H1 (cell line): ENCODE measurements at regions of chr4 and their contacts with region 1.

Region 1: DNA sequence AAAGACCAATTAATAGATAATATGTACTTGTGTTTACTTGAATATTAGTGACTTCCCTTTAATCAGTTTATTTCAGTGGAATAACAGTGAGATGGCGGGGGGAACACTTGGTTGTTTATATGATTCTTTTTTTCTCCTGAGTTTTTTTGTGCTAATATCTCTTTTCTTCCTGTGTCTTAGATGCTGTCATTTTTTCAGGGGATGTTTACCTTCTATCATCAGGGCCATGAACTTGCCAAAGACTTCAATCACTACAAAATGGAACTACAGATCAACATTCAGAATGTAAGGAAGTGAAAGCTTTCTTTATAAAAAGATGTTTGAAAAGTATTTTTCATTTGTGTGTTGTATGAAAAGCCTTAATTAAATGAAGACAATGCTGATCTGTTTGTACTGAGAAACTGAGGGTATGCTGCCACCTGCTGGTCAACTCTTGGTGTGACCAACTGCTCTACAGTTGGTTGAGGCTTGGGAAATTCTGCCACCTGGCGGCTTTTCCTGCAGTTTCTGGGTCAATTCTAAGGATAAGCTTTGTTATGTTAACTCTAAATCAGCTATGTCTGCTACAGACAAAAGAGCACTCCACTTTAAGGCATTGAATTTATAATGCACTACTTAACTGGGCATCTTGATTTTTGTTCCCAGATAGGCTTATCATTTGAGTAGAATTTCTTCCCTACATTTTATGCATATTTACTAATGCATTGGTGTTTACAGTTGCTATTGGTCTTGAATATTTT is 134.8 kb downstream of the ARHGAP10 start:
- DNase-seq: peak; percentile 88 to 94
- H3K4me3 ChIP-seq: peak overlapping the region in 1 of 4 experiments; percentile 12; a peak in 1 of 8 replicates
- H3K27ac ChIP-seq: no peak overlapping the region
- H3K4me1 ChIP-seq: peaks cover 2 to 19% (median 10%) of the 10 kb centered on the region in 4 experiments; a peak in 6 of 7 replicates
- H3K27me3 ChIP-seq: no peaks in the 10 kb centered on the region
- CTCF ChIP-seq: peak; percentile 71 to 100 (median 98)
- EP300 ChIP-seq: no peak
- POLR2A ChIP-seq: no peak
- RAD21 ChIP-seq: peak; percentile 100

Region 2: GRCh38 chr4:147590249-147590920 is 276.3 kb before region 1 on chr4:
- CTCF ChIA-PET with region 1: interaction called, 93 read pairs
- POLR2A ChIA-PET with region 1: no interaction called
- DNase-seq: peak in 1 of 2 experiments; percentile 82
- H3K4me3 ChIP-seq: no peak overlapping the region
- H3K27ac ChIP-seq: no peak overlapping the region
- H3K4me1 ChIP-seq: peaks cover 0 to 3% (median 0%) of the 10 kb centered on the region in 4 experiments; a peak in 1 of 7 replicates
- H3K27me3 ChIP-seq: no peaks in the 10 kb centered on the region
- CTCF ChIP-seq: peak in 2 of 3 experiments; percentile 70; a peak in 3 of 4 replicates
- EP300 ChIP-seq: no peak
- POLR2A ChIP-seq: no peak
- RAD21 ChIP-seq: peak; percentile 93 to 95

Region 3: GRCh38 chr4:147617173-147617840 is 249.4 kb before region 1 on chr4 and contains the start of gene TMEM184C:
- CTCF ChIA-PET with region 1: interaction called, 29 read pairs
- POLR2A ChIA-PET with region 1: interaction called, 4 read pairs
- DNase-seq: peak; percentile 82 to 97
- H3K4me3 ChIP-seq: peak within 1 kb of the TSS; percentile 83 to 100 (median 90)
- H3K27ac ChIP-seq: peak within 1 kb of the TSS; percentile 87
- H3K4me1 ChIP-seq: peaks cover 0 to 5% (median 2%) of the 10 kb centered on the region in 4 experiments; a peak in 2 of 7 replicates
- H3K27me3 ChIP-seq: no peaks in the 10 kb centered on the region
- CTCF ChIP-seq: no peak
- EP300 ChIP-seq: no peak
- POLR2A ChIP-seq: peak; percentile 55 to 83
- RAD21 ChIP-seq: no peak
- total RNA-seq, gene TMEM184C: 39.3 and 42.4 TPM in 2 replicates

Region 4: DNA sequence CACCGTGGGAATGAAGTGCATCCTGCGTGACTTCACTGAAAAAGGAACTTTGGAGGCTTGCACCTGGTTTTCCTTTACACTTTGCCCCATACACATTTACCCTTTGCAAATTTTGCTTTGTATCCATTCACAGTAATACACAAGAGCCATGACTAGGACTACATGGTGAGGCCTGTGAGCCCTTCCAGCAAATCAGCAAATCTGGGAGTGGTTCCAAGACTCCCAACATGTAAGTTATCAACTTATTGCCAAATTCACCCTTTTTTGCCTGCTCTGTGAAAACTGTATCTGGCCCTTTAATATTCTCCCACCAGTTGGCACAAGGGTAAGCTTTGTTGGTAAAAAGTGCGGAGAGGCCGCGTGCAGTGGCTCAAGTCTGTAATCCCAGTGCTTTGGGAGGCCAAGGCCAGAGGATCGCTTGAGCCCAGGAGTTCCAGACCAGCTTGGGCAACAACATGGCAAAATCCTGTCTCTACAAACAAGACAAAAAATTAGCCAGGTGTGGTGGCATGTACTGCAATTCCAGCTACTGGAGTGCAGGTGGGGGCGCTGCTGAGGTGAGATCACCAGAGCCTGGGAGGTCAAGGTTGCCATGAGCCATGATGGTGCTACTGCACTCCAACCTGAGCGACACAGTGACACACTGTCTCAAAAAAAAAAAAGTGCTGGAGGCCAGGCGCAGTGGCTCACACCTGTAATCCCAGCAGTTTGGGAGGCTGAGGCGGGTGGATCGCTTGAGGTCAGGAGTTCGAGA is 187.7 kb before region 1 on chr4:
- CTCF ChIA-PET with region 1: interaction called, 38 read pairs
- POLR2A ChIA-PET with region 1: interaction called, 5 read pairs
- DNase-seq: peak in 1 of 2 experiments; percentile 75
- H3K4me3 ChIP-seq: no peak overlapping the region
- H3K27ac ChIP-seq: no peak overlapping the region
- H3K4me1 ChIP-seq: peaks cover 0 to 2% (median 0%) of the 10 kb centered on the region in 4 experiments; a peak in 2 of 7 replicates
- H3K27me3 ChIP-seq: no peaks in the 10 kb centered on the region
- CTCF ChIP-seq: peak; percentile 67 to 83 (median 76)
- EP300 ChIP-seq: no peak
- POLR2A ChIP-seq: no peak
- RAD21 ChIP-seq: peak; percentile 53 to 67

Region 5: DNA sequence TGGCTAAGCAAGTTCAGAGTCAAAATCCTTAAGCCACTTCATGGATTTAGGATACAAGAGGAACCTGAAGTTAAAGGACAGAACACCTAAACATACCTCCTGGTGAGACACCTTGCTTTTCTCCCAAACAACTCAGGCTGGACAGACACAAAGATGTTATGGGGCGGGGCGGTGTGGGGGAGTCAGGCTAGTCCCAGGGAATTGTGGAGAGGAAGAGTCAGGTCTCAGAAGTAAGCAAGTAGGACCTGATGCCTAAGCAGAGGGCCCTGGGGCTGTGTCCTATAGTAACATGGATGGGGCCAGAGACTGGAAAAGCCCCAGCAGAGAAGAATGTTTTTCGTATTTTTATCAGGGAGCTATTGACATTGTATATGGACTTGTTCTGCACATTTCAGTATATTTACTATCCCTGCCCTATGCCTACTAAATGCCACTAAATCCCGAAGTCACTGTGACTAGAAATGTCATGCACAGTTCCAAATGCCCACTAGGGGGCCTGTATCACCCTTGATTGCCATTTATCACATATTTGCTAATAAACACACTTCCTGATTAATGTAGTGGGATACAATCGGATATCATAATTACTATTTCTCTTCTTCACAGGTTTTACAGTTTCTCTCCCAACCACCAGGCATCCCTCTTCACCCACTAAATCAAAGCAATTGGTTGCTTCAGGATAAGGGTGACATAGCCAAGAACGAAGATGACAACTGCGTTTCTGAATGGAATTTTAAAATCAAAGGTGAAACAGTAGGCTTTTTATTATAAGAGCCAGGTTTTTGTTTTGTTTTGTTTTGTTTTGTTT is 158.6 kb before region 1 on chr4:
- CTCF ChIA-PET with region 1: interaction called, 69 read pairs
- POLR2A ChIA-PET with region 1: no interaction called
- DNase-seq: peak in 1 of 2 experiments; percentile 53
- H3K4me3 ChIP-seq: no peak overlapping the region
- H3K27ac ChIP-seq: no peak overlapping the region
- H3K4me1 ChIP-seq: no peaks in the 10 kb centered on the region
- H3K27me3 ChIP-seq: no peaks in the 10 kb centered on the region
- CTCF ChIP-seq: peak in 2 of 3 experiments; percentile 63 to 81; a peak in 3 of 4 replicates
- EP300 ChIP-seq: no peak
- POLR2A ChIP-seq: no peak
- RAD21 ChIP-seq: peak; percentile 59 to 73

Region 6: GRCh38 chr4:147811878-147812277 is 54.8 kb before region 1 on chr4:
- CTCF ChIA-PET with region 1: interaction called, 11 read pairs
- POLR2A ChIA-PET with region 1: no interaction called
- DNase-seq: no peak
- H3K4me3 ChIP-seq: no peak overlapping the region
- H3K27ac ChIP-seq: no peak overlapping the region
- H3K4me1 ChIP-seq: no peaks in the 10 kb centered on the region; a peak in 2 of 7 replicates
- H3K27me3 ChIP-seq: no peaks in the 10 kb centered on the region
- CTCF ChIP-seq: no peak
- EP300 ChIP-seq: no peak
- POLR2A ChIP-seq: no peak
- RAD21 ChIP-seq: no peak